ENCODE measurements at regions of chr1 and their contacts with region 1.

Region 1: DNA sequence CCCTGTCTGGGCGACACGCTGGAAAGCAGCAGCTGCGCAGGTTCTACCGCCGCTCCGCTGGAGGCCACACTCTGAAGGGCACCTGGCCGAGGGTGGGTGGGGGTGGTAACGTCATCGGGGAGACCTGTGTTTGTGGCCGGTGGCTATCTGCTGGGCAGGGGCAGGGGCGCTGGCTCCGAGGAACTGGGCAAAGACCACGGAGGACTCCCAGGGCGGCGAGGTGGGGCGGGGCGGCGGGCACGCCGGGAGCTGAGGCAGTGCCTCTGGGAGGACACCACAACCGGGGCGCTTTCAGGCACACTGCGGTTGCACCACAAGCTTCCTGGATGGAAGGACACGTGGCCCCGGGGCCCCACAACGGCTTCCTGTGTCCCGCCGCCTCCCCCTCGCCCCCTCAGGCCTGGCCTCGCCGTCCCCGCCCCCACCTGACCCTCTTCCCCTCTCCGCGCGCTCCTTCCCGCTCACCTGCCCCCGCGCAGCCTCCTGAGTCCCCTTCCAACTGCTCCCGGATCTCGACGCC is 3.3 kb upstream of the DENND2D start:
- DNase-seq: peak; percentile 73 to 79 (median 74)
- H3K4me3 ChIP-seq: peak overlapping the region; percentile 43 to 77 (median 44)
- H3K4me3 Mint-ChIP-seq: peak overlapping the region; percentile 83 to 90
- H3K27ac ChIP-seq: peak overlapping the region; percentile 89 to 93
- H3K27ac Mint-ChIP-seq: peak overlapping the region; percentile 86 to 98 (median 95)
- H3K4me1 ChIP-seq: peaks cover 85 to 91% of the 10 kb centered on the region in 2 donors
- H3K4me1 Mint-ChIP-seq: peaks cover 87% of the 10 kb centered on the region
- H3K27me3 ChIP-seq: no peaks in the 10 kb centered on the region
- H3K27me3 Mint-ChIP-seq: peaks cover 0 to 2% (median 0%) of the 10 kb centered on the region in 3 donors
- CTCF ChIP-seq: no peak

Region 2: DNA sequence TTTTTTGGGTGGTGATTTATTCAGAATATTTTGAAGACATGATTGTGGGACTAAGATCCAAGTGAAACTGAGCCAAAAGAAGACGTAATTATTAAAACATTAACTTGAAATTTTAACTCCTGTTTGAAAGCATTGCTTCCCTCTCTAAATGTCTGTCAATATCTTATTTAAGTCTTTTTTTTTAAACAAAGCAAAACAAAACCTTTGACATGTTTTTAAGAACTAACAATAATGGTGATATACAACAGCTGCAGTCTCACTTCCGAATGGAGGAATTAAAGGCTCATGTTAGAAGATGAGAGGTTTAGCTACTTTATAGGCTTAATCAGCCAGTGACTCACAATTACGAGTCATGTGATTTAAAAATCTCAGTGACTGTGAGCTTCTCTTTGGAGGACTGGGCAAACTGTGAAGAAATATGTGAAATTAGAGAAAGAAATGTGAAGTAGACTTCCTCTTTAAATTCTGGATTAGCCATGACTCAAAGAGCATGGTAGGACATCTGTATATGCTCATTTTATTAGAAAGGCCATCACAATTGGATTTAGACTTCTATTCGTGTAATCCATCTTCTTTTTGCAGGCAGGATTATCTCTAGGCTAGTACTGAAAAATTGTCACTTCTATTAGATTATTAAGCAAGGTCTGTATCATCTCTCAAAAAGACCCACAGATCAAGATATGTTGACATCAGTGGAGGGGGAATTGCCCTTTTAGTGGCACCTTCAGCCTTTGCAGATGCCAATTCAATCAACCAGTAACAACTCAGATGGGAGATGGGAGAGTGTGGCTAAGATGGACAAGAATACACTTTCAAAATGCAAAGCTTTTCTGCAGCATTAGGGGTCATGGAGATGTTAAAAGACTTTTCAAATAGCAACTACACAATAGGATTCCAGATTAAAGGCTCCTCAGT is 557.7 kb before region 1 on chr1:
- intact Hi-C with region 1: loop called in 1 of 2 experiments (anchors 10 kb)
- DNase-seq: peak; percentile 93 to 99 (median 97)
- H3K4me3 ChIP-seq: no peak overlapping the region
- H3K4me3 Mint-ChIP-seq: peak overlapping the region in 1 of 2 donors; percentile 7
- H3K27ac ChIP-seq: peak overlapping the region in 1 of 2 donors; percentile 85
- H3K27ac Mint-ChIP-seq: peak overlapping the region; percentile 91 to 98 (median 96)
- H3K4me1 ChIP-seq: peaks cover 64 to 71% of the 10 kb centered on the region in 2 donors
- H3K4me1 Mint-ChIP-seq: peaks cover 55% of the 10 kb centered on the region
- H3K27me3 ChIP-seq: no peaks in the 10 kb centered on the region
- H3K27me3 Mint-ChIP-seq: peaks cover 0 to 6% (median 0%) of the 10 kb centered on the region in 3 donors
- CTCF ChIP-seq: no peak

Region 3: GRCh38 chr1:111139956-111140679 is 63.6 kb before region 1 on chr1 and contains the starts of genes CEPT1 and DRAM2:
- intact Hi-C with region 1: loop called in 1 of 2 experiments (anchors 5 kb)
- DNase-seq: peak; percentile 90 to 91 (median 90)
- H3K4me3 ChIP-seq: peak within 1 kb of the TSS; percentile 68 to 99 (median 92)
- H3K4me3 Mint-ChIP-seq: peak within 1 kb of the TSS; percentile 99 to 100
- H3K27ac ChIP-seq: peak within 1 kb of the TSS; percentile 77 to 91
- H3K27ac Mint-ChIP-seq: peak within 1 kb of the TSS; percentile 95 to 99 (median 97)
- H3K4me1 ChIP-seq: peaks cover 35 to 49% of the 10 kb centered on the region in 2 donors
- H3K4me1 Mint-ChIP-seq: peaks cover 56% of the 10 kb centered on the region
- H3K27me3 ChIP-seq: no peaks in the 10 kb centered on the region
- H3K27me3 Mint-ChIP-seq: peaks cover 0 to 1% (median 0%) of the 10 kb centered on the region in 3 donors
- CTCF ChIP-seq: no peak
- polyA plus RNA-seq, gene CEPT1: 20.8 to 44.3 (median 26.9) TPM
- polyA plus RNA-seq, gene DRAM2: 85.9 to 204 (median 190) TPM

Region 4: DNA sequence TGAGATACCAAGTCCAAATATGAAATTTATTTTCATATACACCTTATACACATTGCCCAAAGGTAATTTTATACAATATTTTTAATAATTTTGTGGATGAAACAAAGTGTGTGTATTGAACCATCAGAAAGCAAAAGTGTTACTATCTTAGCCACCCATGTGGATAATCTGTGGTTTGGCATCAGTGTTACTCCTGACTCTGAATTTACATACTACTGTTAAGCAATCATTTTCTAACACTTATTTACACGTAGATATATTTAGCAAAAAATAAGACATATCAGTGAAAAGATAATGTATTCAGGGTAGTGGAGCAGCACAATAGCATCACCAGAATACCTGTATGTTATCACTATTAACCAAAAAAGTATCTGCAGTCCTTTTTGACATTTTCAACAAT is 27.1 kb before region 1 on chr1:
- intact Hi-C with region 1: no loop called
- DNase-seq: no peak
- H3K4me3 ChIP-seq: no peak overlapping the region
- H3K4me3 Mint-ChIP-seq: no peak overlapping the region
- H3K27ac ChIP-seq: no peak overlapping the region
- H3K27ac Mint-ChIP-seq: no peak overlapping the region
- H3K4me1 ChIP-seq: no peaks in the 10 kb centered on the region
- H3K4me1 Mint-ChIP-seq: peaks cover 2% of the 10 kb centered on the region
- H3K27me3 ChIP-seq: no peaks in the 10 kb centered on the region
- H3K27me3 Mint-ChIP-seq: no peaks in the 10 kb centered on the region
- CTCF ChIP-seq: no peak

Region 5: DNA sequence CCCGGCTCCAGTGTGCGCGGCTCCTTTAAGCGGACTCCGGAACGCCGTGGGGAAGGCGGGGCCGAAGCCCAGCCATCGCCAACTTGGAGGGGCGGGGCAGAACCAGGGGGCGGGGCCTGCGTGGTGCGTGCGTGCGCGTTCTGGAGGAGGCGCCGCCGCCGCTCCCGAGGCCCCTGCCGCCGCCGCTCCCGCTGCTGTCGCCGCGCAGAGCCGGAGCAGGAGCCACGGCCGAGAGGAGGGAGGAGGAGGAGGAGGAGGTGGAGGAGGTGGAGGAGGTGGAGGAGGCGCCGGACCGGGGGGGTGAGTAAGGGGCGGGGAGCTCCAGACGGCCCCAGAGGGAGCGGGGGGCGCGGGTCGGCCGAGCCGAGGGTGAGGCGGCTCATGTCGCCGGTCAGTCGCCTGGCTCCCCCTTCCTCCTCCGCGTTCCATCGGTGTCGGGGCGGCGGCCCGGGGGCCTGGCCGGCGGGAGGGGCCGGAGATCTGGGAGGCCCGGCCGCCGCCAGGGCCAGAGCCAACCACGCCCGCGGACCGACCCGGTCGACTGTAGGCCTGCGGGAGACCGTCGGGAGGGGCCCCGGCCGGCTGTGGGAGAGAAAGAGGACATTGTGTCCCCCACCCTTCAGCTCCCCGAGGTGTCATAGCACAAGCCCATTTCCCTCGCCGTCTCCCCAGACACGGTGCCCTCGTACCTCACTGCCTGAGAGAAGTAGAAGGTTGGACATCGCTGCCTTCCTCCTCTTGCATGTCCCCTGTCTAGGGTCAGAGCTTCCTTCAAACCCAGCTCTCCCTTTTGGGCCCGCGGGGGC is 416.1 kb after region 1 on chr1 and contains the start of gene RAP1A:
- intact Hi-C with region 1: loop called in 1 of 2 experiments (anchors 5 kb)
- DNase-seq: peak; percentile 82 to 86 (median 85)
- H3K4me3 ChIP-seq: peak within 1 kb of the TSS; percentile 65 to 89 (median 79)
- H3K4me3 Mint-ChIP-seq: peak within 1 kb of the TSS; percentile 79 to 96
- H3K27ac ChIP-seq: peak within 1 kb of the TSS; percentile 86 to 89
- H3K27ac Mint-ChIP-seq: peak within 1 kb of the TSS; percentile 93 to 98 (median 97)
- H3K4me1 ChIP-seq: peaks cover 58 to 70% of the 10 kb centered on the region in 2 donors
- H3K4me1 Mint-ChIP-seq: peaks cover 72% of the 10 kb centered on the region
- H3K27me3 ChIP-seq: no peaks in the 10 kb centered on the region
- H3K27me3 Mint-ChIP-seq: no peaks in the 10 kb centered on the region
- CTCF ChIP-seq: no peak
- polyA plus RNA-seq, gene RAP1A: 41.2 to 79.1 (median 75.3) TPM

Region 6: DNA sequence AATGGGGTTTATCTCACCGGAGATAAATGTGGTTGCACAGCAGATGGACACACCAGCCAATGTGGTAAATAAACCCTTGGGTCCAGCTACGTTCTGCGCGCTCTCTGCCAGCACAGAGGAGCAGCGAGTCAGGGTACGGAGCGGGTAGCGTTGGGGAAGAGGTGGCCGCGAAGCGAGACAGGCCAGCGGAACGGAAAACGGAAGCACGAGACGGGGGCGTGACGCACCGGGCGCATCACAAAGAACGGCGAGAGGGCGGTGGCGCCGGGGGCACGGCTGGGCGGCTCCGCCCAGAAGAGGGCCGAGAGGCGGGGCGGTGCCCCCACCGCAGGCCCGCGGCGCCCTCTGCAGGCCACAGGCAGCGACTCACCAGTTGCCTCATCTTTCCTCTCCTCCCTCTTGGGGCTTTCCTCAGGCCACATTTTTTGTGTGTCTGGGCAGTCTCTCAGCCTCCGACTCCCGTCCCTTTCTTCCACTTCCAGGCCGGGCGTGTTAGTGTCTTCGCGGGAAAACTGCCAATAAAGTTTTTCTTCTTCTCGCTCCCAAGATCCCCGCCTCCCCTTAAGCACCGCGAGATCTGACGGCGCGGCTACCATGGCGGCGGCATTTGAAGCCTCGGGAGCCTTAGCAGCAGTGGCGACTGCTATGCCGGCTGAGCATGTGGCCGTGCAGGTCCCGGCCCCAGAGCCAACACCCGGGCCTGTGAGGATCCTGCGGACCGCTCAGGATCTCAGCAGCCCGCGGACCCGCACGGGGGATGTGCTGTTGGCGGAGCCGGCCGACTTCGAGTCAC is 551.8 kb after region 1 on chr1 and contains the start of gene DDX20:
- intact Hi-C with region 1: loop called in 1 of 2 experiments (anchors 5 kb)
- DNase-seq: peak; percentile 94 to 96 (median 96)
- H3K4me3 ChIP-seq: peak within 1 kb of the TSS; percentile 75 to 96 (median 85)
- H3K4me3 Mint-ChIP-seq: peak within 1 kb of the TSS; percentile 86 to 96
- H3K27ac ChIP-seq: peak within 1 kb of the TSS; percentile 88 to 98
- H3K27ac Mint-ChIP-seq: peak within 1 kb of the TSS; percentile 97 to 100 (median 99)
- H3K4me1 ChIP-seq: peaks cover 27 to 30% of the 10 kb centered on the region in 2 donors
- H3K4me1 Mint-ChIP-seq: peaks cover 35% of the 10 kb centered on the region
- H3K27me3 ChIP-seq: no peaks in the 10 kb centered on the region
- H3K27me3 Mint-ChIP-seq: peaks cover 0 to 2% (median 1%) of the 10 kb centered on the region in 3 donors
- CTCF ChIP-seq: peak; percentile 84
- polyA plus RNA-seq, gene DDX20: 3.1 to 4.1 (median 4.0) TPM

Region 7: DNA sequence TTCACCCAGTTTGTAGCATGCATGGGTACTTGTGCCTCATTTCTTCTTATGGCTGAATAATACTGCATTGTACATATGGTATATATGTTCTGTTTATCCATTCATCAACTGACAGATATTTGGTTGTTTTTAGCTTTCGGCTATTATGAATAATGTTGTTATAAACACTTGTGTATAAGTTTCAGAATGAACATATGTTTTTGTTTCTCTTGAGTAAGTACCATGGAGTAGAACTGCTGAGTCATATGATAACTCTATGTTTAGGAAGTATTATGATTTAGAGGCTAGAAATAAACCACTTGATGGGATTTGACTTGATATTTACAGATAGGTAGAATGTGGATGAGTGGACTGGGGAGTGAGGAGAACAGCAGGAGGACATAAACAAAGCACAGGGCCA is 1353.6 kb after region 1 on chr1:
- intact Hi-C with region 1: no loop called
- DNase-seq: no peak
- H3K4me3 ChIP-seq: no peak overlapping the region
- H3K4me3 Mint-ChIP-seq: no peak overlapping the region
- H3K27ac ChIP-seq: no peak overlapping the region
- H3K27ac Mint-ChIP-seq: peak overlapping the region in 1 of 7 donors; percentile 16
- H3K4me1 ChIP-seq: no peaks in the 10 kb centered on the region
- H3K4me1 Mint-ChIP-seq: no peaks in the 10 kb centered on the region
- H3K27me3 ChIP-seq: no peaks in the 10 kb centered on the region
- H3K27me3 Mint-ChIP-seq: no peaks in the 10 kb centered on the region
- CTCF ChIP-seq: no peak